Mammary epithelial cell (primary cell): ENCODE measurements at regions of chr4 and their contacts with region 1.

Region 1: GRCh38 chr4:7192252-7193029 is at the start of gene SORCS2:
- DNase-seq: no peak
- H3K4me3 ChIP-seq: peak within 1 kb of the TSS; percentile 5 to 43 (median 35)
- H3K27ac ChIP-seq: no peak within 1 kb of the TSS
- H3K4me1 ChIP-seq: peaks cover 15% of the 10 kb centered on the region
- H3K27me3 ChIP-seq: peaks cover 12% of the 10 kb centered on the region
- CTCF ChIP-seq: peak; percentile 26 to 49
- total RNA-seq, gene SORCS2: 1.6 to 10.7 TPM

Region 2: DNA sequence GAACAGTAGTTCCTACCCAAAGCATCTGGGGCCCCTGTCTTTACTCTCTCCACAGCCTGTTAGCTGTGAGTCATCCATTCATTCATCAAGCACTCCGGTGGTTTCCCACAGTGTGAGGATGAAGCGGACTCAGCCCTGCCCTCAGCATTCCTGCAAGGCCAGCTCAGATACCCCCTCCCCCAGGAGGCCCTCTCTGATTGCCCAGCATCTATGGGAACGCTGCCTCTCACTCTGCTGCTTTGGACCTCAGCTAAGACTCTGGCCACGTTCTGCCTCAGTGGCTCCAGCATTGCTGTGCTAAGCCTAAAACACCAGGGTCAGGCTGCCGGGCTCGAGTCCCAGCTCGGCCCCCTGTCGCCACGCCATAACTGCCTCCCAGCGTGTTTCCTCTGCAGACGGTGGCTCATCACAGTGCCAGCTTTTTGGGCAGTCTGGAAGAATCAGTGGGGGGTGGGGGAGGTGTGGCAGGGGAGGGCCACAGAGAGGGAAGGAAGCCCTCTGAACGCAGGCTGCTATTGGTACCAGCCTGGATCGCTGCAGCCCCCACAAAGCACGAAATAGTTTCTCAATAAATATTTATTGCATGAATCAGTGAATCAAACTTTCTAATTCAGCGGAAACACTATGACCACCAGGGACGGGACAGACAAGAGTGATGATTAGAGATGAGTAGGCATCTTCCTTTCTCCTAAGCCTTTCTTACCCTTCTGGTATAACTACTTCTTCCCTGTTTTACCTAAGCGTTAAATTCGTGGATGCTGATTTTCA is 74.3 kb after region 1 on chr4:
- CTCF ChIA-PET with region 1: no interaction called
- dilution Hi-C with region 1: no loop called
- in situ Hi-C with region 1: no loop called
- intact Hi-C with region 1: no loop called
- DNase-seq: peak; percentile 84
- H3K4me3 ChIP-seq: no peak overlapping the region
- H3K27ac ChIP-seq: no peak overlapping the region
- H3K4me1 ChIP-seq: peaks cover 16% of the 10 kb centered on the region
- H3K27me3 ChIP-seq: no peaks in the 10 kb centered on the region
- CTCF ChIP-seq: no peak

Region 3: DNA sequence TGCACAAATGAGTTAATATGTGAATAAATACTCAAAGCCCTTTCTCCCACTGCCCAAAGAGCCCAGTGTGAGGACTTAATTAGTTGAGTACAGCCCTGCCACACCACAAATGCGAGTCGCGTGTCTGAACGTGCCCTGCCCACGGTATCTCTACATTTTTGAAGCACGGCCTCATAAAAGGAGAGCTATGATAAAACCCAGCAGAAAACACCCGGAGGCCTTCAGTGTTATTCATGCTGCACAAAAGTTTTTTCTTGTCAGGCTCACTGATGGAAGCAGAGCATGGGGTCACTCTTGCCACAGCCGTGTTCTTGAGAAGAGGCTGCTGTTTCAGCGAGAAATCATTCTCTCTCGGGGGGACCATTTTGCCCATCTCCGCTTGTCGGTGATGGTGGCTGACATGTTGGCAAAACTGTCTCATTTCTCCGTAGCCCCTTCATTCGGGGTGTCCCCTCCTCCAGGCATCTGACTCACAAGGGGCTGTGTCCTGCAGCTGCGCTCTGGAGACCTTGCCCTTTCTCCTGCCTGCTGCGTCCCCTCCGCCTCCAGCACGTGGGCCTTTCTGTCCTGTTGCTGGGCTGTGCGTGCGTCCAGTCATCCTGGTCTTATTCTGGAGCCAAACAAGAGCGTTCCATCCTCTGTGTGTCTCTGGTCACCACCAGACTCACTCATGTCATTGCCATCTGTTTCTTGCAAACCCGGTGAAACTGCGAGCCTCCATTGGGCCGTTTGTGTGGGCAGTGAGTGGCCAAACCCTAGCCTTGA is 88.7 kb after region 1 on chr4:
- CTCF ChIA-PET with region 1: no interaction called
- dilution Hi-C with region 1: no loop called
- in situ Hi-C with region 1: no loop called
- intact Hi-C with region 1: loop called (anchors 5 kb)
- DNase-seq: peak; percentile 87
- H3K4me3 ChIP-seq: no peak overlapping the region
- H3K27ac ChIP-seq: no peak overlapping the region
- H3K4me1 ChIP-seq: peaks cover 26% of the 10 kb centered on the region
- H3K27me3 ChIP-seq: no peaks in the 10 kb centered on the region
- CTCF ChIP-seq: no peak

Region 4: GRCh38 chr4:7335344-7336069 is 143.1 kb after region 1 on chr4:
- CTCF ChIA-PET with region 1: interaction called, 8 read pairs
- dilution Hi-C with region 1: no loop called
- in situ Hi-C with region 1: no loop called
- intact Hi-C with region 1: loop called (anchors 1 kb)
- DNase-seq: peak; percentile 18
- H3K4me3 ChIP-seq: no peak overlapping the region
- H3K27ac ChIP-seq: no peak overlapping the region
- H3K4me1 ChIP-seq: peaks cover 4% of the 10 kb centered on the region
- H3K27me3 ChIP-seq: no peaks in the 10 kb centered on the region
- CTCF ChIP-seq: peak; percentile 70 to 88

Region 5: GRCh38 chr4:7719354-7720174 is 527.1 kb after region 1 on chr4:
- CTCF ChIA-PET with region 1: no interaction called
- dilution Hi-C with region 1: no loop called
- in situ Hi-C with region 1: loop called (anchors 10 to 25 kb)
- intact Hi-C with region 1: loop called (anchors 1 kb)
- DNase-seq: peak; percentile 12
- H3K4me3 ChIP-seq: no peak overlapping the region
- H3K27ac ChIP-seq: no peak overlapping the region
- H3K4me1 ChIP-seq: no peaks in the 10 kb centered on the region
- H3K27me3 ChIP-seq: no peaks in the 10 kb centered on the region
- CTCF ChIP-seq: peak; percentile 68 to 86

Region 6: DNA sequence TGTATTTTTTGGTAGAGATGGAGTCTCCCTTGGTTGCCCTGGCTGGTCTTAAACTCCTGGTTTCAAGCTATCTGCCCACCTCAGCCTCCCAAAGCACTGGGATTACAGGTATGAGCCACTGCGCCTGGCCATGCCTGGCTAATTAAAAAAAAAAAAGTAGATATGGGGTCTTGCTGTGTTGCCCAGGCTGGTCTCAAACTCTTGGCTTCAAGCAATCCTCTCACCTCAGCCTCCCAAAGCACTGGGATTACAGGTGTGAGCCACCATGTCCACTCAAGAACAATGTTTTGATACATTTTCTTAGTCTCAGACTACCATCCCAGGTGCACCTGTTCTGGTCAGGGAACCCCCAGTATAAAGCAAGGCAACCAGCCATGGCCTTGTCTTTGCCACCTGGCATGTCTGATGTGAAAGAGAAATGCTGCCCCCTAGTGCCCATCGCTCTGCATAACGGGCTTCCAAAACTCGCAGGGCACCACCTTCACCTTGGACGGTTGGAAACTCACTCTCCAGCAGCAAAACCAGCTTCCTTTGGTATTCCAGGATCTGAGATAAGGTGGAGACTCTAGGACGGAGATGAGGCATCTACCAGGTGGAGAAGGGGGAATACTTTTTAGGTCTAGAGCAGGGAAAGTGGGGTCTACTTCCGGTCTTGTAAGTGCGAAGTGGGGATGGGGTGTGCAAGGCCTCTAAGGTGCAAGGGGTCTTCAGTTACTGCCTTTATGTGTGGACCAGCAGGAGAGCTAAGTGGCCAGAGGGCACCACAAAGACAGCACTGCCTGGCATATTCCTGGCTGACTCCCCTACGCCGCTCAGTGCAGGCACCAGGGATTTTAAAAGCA is 794.9 kb after region 1 on chr4:
- CTCF ChIA-PET with region 1: no interaction called
- dilution Hi-C with region 1: no loop called
- in situ Hi-C with region 1: no loop called
- intact Hi-C with region 1: loop called (anchors 5 kb)
- DNase-seq: peak; percentile 59
- H3K4me3 ChIP-seq: no peak overlapping the region
- H3K27ac ChIP-seq: no peak overlapping the region
- H3K4me1 ChIP-seq: peaks cover 12% of the 10 kb centered on the region
- H3K27me3 ChIP-seq: no peaks in the 10 kb centered on the region
- CTCF ChIP-seq: peak; percentile 85 to 95